Endothelial cell of umbilical vein (primary cell): ENCODE measurements at regions of chr16 and their contacts with region 1.

Region 1: GRCh38 chr16:1054660-1055556 is 17.6 kb upstream of the SSTR5 start:
- DNase-seq: peak; percentile 36
- H3K4me3 ChIP-seq: no peak overlapping the region
- H3K27ac ChIP-seq: no peak overlapping the region
- H3K4me1 ChIP-seq: no peaks in the 10 kb centered on the region
- H3K27me3 ChIP-seq: no peaks in the 10 kb centered on the region
- CTCF ChIP-seq: peak; percentile 91
- POLR2A ChIP-seq: no peak

Region 2: DNA sequence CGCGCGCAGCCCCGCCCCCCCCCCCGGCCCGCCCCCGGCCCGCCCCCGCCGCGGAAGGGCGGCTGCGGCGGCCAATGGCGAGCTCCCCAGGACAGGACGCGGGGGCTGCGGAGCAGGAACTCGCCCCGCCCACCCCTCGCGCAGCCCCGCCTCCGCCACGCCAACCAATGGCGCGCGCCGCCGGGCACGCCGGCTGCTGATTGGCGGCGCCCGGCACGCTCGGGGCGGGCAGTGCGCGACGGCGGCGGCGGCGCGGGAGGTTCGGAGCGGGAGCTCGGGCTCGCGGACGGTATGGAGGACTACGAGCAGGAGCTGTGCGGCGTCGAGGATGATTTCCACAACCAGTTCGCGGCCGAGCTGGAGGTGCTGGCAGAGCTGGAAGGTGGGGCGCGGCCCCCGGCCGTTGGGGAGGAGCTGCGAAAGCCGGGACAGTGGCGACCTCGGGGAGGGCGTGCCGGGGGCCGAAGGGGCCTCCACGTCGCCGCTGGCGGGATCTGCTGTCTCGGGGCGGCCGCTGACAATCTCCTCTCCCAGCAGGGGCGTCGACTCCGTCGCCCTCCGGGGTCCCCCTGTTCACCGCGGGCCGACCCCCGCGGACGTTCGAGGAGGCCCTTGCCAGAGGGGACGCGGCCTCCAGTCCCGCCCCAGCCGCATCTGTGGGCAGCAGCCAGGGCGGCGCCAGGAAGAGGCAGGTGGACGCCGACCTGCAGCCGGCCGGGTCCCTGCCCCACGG is 266.3 kb before region 1 on chr16 and contains the start of gene CHTF18:
- CTCF ChIA-PET with region 1: interaction called, 19 read pairs
- POLR2A ChIA-PET with region 1: no interaction called
- dilution Hi-C with region 1: no loop called
- intact Hi-C with region 1: no loop called
- DNase-seq: peak; percentile 91
- H3K4me3 ChIP-seq: peak within 1 kb of the TSS; percentile 75 to 92 (median 76)
- H3K27ac ChIP-seq: peak within 1 kb of the TSS; percentile 38
- H3K4me1 ChIP-seq: peaks cover 13% of the 10 kb centered on the region
- H3K27me3 ChIP-seq: no peaks in the 10 kb centered on the region
- CTCF ChIP-seq: no peak
- POLR2A ChIP-seq: no peak
- total RNA-seq, gene CHTF18: 58.6 and 69.5 TPM in 2 replicates

Region 3: GRCh38 chr16:997440-998051 is 57.4 kb before region 1 on chr16:
- CTCF ChIA-PET with region 1: interaction called, 22 read pairs
- POLR2A ChIA-PET with region 1: no interaction called
- dilution Hi-C with region 1: no loop called
- intact Hi-C with region 1: no loop called
- DNase-seq: peak; percentile 68
- H3K4me3 ChIP-seq: peak overlapping the region in 1 of 3 experiments; percentile 11
- H3K27ac ChIP-seq: peak overlapping the region; percentile 16
- H3K4me1 ChIP-seq: peaks cover 15% of the 10 kb centered on the region
- H3K27me3 ChIP-seq: no peaks in the 10 kb centered on the region
- CTCF ChIP-seq: no peak
- POLR2A ChIP-seq: no peak

Region 4: GRCh38 chr16:1069154-1069553 is 14.2 kb after region 1 on chr16:
- CTCF ChIA-PET with region 1: interaction called, 57 read pairs
- POLR2A ChIA-PET with region 1: no interaction called
- dilution Hi-C with region 1: no loop called
- intact Hi-C with region 1: no loop called
- DNase-seq: no peak
- H3K4me3 ChIP-seq: no peak overlapping the region
- H3K27ac ChIP-seq: no peak overlapping the region
- H3K4me1 ChIP-seq: no peaks in the 10 kb centered on the region
- H3K27me3 ChIP-seq: peaks cover 12 to 21% of the 10 kb centered on the region in 2 experiments
- CTCF ChIP-seq: no peak
- POLR2A ChIP-seq: no peak

Region 5: GRCh38 chr16:1093284-1094123 is 38.6 kb after region 1 on chr16:
- CTCF ChIA-PET with region 1: interaction called, 7 read pairs
- POLR2A ChIA-PET with region 1: no interaction called
- dilution Hi-C with region 1: no loop called
- intact Hi-C with region 1: loop called (anchors 2 kb)
- DNase-seq: no peak
- H3K4me3 ChIP-seq: no peak overlapping the region
- H3K27ac ChIP-seq: no peak overlapping the region
- H3K4me1 ChIP-seq: peaks cover 7% of the 10 kb centered on the region
- H3K27me3 ChIP-seq: no peaks in the 10 kb centered on the region
- CTCF ChIP-seq: no peak
- POLR2A ChIP-seq: no peak

Region 6: DNA sequence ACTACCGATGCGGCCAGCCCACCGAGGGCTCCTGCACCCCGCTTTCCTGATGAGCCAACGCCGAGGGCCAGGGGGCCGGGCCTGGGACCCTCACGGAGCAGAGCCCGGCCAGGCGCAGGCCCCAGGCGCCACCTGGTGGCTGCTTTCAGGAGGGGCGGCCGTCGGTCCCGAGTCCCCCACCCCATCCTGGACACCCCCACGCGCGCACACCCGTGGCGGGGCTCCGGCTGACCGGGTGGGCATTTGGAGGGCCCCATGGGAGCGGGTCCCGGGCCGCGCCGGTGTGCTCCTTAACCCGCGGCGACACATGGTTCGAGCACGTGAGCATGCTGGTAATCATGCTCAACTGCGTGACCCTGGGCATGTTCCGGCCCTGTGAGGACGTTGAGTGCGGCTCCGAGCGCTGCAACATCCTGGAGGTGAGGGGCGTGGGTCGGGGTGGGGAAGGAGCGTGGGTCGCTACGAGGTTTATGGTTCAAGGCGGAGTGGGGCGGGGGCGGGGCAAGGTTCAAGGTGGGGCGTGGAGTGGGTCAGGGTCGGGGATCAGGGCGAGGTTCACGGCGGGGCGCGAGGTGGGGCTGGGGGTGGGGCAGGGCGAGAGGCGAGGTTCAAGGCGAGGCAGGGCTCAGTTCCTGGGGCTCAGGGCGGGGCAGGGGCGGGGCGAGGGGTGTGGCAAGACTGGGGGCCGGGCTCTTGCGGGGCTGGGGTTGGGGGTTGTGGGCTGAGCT is 139.9 kb after region 1 on chr16:
- CTCF ChIA-PET with region 1: interaction called, 7 read pairs
- POLR2A ChIA-PET with region 1: no interaction called
- dilution Hi-C with region 1: no loop called
- intact Hi-C with region 1: loop called (anchors 1 kb)
- DNase-seq: no peak
- H3K4me3 ChIP-seq: no peak overlapping the region
- H3K27ac ChIP-seq: no peak overlapping the region
- H3K4me1 ChIP-seq: no peaks in the 10 kb centered on the region
- H3K27me3 ChIP-seq: no peaks in the 10 kb centered on the region
- CTCF ChIP-seq: peak; percentile 66 to 88
- POLR2A ChIP-seq: no peak